Activated CD8-positive, alpha-beta T cell treated with anti-CD3 and anti-CD28 coated beads for 36 hours (primary cell): ENCODE measurements at regions of chr2 and their contacts with region 1.

Region 1: GRCh38 chr2:177332041-177332991 is 60.3 kb upstream of the AGPS start:
- DNase-seq: peak; percentile 51
- ATAC-seq: peak; percentile 92
- H3K4me3 Mint-ChIP-seq: no peak overlapping the region
- H3K27ac Mint-ChIP-seq: no peak overlapping the region
- H3K4me1 Mint-ChIP-seq: peaks cover 7% of the 10 kb centered on the region
- H3K27me3 Mint-ChIP-seq: no peaks in the 10 kb centered on the region
- CTCF ChIP-seq: peak; percentile 79

Region 2: DNA sequence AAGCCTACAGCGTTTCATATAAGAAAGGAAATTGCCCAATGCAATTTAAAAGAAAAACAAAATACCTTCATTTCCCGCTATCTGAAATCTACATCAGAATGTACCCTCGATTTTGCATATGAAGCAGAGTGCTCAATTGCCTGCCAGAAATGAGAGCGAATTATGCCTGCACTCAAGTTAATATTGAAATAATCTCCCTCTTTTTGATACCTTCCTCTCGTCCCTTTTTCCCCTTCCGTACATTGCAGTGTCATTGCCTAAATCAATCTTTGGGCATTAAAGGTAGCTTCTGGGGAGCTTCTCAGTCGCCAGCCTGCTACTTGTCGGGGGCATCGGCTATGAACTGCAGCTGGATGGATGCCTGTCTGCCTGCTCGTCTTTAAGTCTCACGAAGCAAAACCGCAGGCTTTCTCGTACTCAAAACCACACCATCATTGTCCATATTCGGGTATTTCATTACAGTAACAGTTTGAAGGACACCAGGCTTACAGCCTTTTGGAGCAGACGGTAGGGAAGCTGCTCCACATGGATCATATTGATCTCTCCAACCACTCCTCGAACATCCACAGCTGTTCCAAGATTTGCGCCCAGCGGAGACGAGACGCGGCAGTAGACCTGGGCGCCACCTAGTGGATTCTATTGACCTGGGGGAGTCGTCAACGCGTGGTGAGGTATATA is 183.7 kb before region 1 on chr2:
- CTCF ChIA-PET with region 1: interaction called, 19 read pairs
- POLR2A ChIA-PET with region 1: no interaction called
- intact Hi-C with region 1: no loop called
- DNase-seq: peak; percentile 86
- ATAC-seq: peak; percentile 89
- H3K4me3 Mint-ChIP-seq: peak overlapping the region; percentile 81
- H3K27ac Mint-ChIP-seq: no peak overlapping the region
- H3K4me1 Mint-ChIP-seq: peaks cover 5% of the 10 kb centered on the region
- H3K27me3 Mint-ChIP-seq: peaks cover 31% of the 10 kb centered on the region
- CTCF ChIP-seq: peak; percentile 98

Region 3: DNA sequence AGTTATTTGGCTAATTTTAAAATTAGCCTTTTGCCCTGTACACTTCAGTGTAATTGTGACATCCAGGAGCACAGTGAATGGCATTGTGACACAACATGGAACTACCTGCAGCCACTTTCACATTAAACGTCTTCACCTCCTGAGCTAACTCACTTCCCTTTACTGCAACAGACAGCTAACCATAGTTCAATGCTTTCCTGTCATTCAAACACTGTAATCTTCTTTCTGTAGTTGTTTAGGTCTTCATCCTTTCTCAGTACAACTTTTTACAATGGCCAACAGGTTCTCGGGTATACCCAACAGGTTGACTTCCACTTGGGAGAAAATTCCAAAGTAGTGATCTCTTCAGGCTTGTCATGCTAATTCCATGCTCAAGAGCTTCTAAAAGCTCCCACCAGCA is 51.6 kb after region 1 on chr2:
- CTCF ChIA-PET with region 1: interaction called, 11 read pairs
- POLR2A ChIA-PET with region 1: no interaction called
- intact Hi-C with region 1: no loop called
- DNase-seq: no peak
- ATAC-seq: no peak
- H3K4me3 Mint-ChIP-seq: no peak overlapping the region
- H3K27ac Mint-ChIP-seq: no peak overlapping the region
- H3K4me1 Mint-ChIP-seq: no peaks in the 10 kb centered on the region
- H3K27me3 Mint-ChIP-seq: no peaks in the 10 kb centered on the region
- CTCF ChIP-seq: no peak

Region 4: DNA sequence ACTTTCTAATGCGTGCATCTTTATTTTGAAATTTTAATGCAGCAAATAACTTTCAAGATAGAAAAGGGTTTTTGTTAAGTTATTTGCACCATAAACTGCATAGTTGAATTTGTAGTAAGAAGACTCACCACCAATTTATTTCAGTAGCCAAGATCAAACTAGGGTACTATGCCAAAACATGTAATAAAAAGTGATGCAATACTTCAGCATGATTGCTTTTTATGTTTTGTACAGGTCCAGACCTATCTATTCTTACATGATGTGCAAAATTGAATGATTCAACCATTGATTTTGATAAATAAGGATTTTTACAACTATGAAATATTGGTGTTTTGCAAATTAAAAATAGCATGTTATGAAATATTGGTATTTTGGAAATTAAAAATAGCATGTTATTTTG is 87.0 kb after region 1 on chr2:
- CTCF ChIA-PET with region 1: interaction called, 163 read pairs
- POLR2A ChIA-PET with region 1: no interaction called
- intact Hi-C with region 1: loop called (anchors 1 kb)
- DNase-seq: no peak
- ATAC-seq: no peak
- H3K4me3 Mint-ChIP-seq: no peak overlapping the region
- H3K27ac Mint-ChIP-seq: peak overlapping the region; percentile 68
- H3K4me1 Mint-ChIP-seq: peaks cover 35% of the 10 kb centered on the region
- H3K27me3 Mint-ChIP-seq: no peaks in the 10 kb centered on the region
- CTCF ChIP-seq: no peak

Region 5: DNA sequence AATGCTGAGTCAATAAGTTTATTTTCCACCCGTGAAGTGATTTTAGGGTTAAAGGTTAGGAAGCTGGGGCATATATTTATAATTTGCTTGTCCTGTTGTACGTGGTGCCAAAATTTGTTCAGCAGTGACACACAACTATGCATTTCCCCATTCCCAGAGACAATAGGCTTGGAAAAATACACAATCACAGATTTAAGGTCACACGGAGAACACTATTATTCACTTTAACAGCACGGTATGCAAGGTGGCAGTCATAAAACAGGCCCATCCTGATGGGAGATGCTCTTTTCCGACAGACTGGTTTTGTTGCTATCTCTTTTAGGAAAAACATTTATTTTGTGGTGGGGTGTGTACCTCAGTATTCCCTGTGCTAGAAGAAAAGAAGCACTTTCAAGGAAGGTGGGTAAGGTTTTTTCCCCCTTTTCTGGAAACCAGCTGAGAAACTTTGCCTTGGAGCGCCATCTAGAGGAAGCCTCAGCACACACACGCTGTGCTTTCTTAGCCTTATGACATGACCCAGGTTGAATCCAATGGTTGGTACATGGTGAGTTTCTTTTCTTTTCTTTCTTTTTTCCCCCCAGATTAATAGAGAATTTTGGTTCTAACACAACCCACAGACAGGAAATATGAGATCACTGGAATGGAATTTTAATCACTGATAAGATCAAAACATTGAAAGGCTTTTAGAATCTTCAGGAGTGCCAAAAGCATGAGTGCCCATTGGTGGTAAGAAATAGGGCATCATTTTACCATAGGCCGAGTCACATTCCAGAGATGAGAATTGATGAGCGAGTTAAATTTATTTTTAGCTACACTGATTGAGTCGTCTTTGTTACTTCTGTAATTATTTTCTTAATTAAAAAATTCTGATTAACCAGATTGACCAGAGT is 392.3 kb after region 1 on chr2:
- CTCF ChIA-PET with region 1: interaction called, 24 read pairs
- POLR2A ChIA-PET with region 1: no interaction called
- intact Hi-C with region 1: loop called (anchors 5 kb)
- DNase-seq: peak; percentile 63
- ATAC-seq: peak; percentile 73
- H3K4me3 Mint-ChIP-seq: no peak overlapping the region
- H3K27ac Mint-ChIP-seq: no peak overlapping the region
- H3K4me1 Mint-ChIP-seq: no peaks in the 10 kb centered on the region
- H3K27me3 Mint-ChIP-seq: peaks cover 13% of the 10 kb centered on the region
- CTCF ChIP-seq: peak; percentile 92